Natural killer cell (primary cell): ENCODE measurements at regions of chr7 and their contacts with region 1.

Region 1: GRCh38 chr7:105149827-105150226 is 135.8 kb downstream of the KMT2E start:
- DNase-seq: no peak
- ATAC-seq: no peak
- H3K4me3 ChIP-seq: no peak overlapping the region
- H3K4me3 Mint-ChIP-seq: no peak overlapping the region
- H3K27ac ChIP-seq: no peak overlapping the region
- H3K27ac Mint-ChIP-seq: peak overlapping the region in 1 of 2 donors; percentile 36
- H3K4me1 ChIP-seq: peaks cover 4% of the 10 kb centered on the region
- H3K4me1 Mint-ChIP-seq: peaks cover 28 to 33% of the 10 kb centered on the region in 2 donors
- H3K27me3 ChIP-seq: no peaks in the 10 kb centered on the region
- H3K27me3 Mint-ChIP-seq: no peaks in the 10 kb centered on the region
- CTCF ChIP-seq: no peak

Region 2: DNA sequence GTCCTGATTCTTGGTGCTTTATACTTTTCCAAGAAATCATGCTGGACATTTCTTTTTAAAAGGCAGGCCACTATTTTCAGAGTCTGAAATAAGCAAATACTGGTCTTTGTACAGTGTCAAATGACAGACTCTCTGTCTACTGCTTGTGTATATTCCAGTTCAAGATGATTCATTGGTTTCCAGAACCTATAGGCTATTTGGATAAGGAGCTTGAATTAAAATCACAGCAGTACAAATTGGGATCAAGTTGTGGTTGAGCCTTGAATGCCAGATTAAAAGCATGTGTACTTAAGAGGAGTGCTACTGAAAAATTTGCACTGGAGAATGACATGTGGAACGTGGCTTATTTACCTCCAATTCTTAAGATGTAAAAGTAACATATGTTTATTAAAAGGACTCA is 125.1 kb before region 1 on chr7:
- intact Hi-C with region 1: no loop called
- DNase-seq: no peak
- ATAC-seq: no peak
- H3K4me3 ChIP-seq: no peak overlapping the region
- H3K4me3 Mint-ChIP-seq: peak overlapping the region; percentile 57
- H3K27ac ChIP-seq: no peak overlapping the region
- H3K27ac Mint-ChIP-seq: peak overlapping the region; percentile 65 to 84
- H3K4me1 ChIP-seq: peaks cover 36% of the 10 kb centered on the region
- H3K4me1 Mint-ChIP-seq: peaks cover 79 to 86% of the 10 kb centered on the region in 2 donors
- H3K27me3 ChIP-seq: no peaks in the 10 kb centered on the region
- H3K27me3 Mint-ChIP-seq: no peaks in the 10 kb centered on the region
- CTCF ChIP-seq: no peak

Region 3: GRCh38 chr7:105336009-105336408 is 186.2 kb after region 1 on chr7:
- intact Hi-C with region 1: loop called (anchors 5 kb)
- DNase-seq: peak in 1 of 2 donors; percentile 43
- ATAC-seq: no peak
- H3K4me3 ChIP-seq: no peak overlapping the region
- H3K4me3 Mint-ChIP-seq: no peak overlapping the region
- H3K27ac ChIP-seq: no peak overlapping the region
- H3K27ac Mint-ChIP-seq: no peak overlapping the region
- H3K4me1 ChIP-seq: peaks cover 15% of the 10 kb centered on the region
- H3K4me1 Mint-ChIP-seq: peaks cover 25 to 29% of the 10 kb centered on the region in 2 donors
- H3K27me3 ChIP-seq: no peaks in the 10 kb centered on the region
- H3K27me3 Mint-ChIP-seq: no peaks in the 10 kb centered on the region
- CTCF ChIP-seq: peak; percentile 64

Region 4: GRCh38 chr7:105429746-105430612 is 280.2 kb after region 1 on chr7:
- intact Hi-C with region 1: loop called (anchors 1 kb)
- DNase-seq: peak; percentile 19 to 79
- ATAC-seq: peak; percentile 44 to 75 (median 58)
- H3K4me3 ChIP-seq: no peak overlapping the region
- H3K4me3 Mint-ChIP-seq: no peak overlapping the region
- H3K27ac ChIP-seq: no peak overlapping the region
- H3K27ac Mint-ChIP-seq: no peak overlapping the region
- H3K4me1 ChIP-seq: no peaks in the 10 kb centered on the region
- H3K4me1 Mint-ChIP-seq: no peaks in the 10 kb centered on the region
- H3K27me3 ChIP-seq: no peaks in the 10 kb centered on the region
- H3K27me3 Mint-ChIP-seq: no peaks in the 10 kb centered on the region
- CTCF ChIP-seq: peak; percentile 57

Region 5: GRCh38 chr7:105635197-105635596 is 485.4 kb after region 1 on chr7:
- intact Hi-C with region 1: no loop called
- DNase-seq: no peak
- ATAC-seq: no peak
- H3K4me3 ChIP-seq: no peak overlapping the region
- H3K4me3 Mint-ChIP-seq: no peak overlapping the region
- H3K27ac ChIP-seq: no peak overlapping the region
- H3K27ac Mint-ChIP-seq: no peak overlapping the region
- H3K4me1 ChIP-seq: no peaks in the 10 kb centered on the region
- H3K4me1 Mint-ChIP-seq: no peaks in the 10 kb centered on the region
- H3K27me3 ChIP-seq: no peaks in the 10 kb centered on the region
- H3K27me3 Mint-ChIP-seq: no peaks in the 10 kb centered on the region
- CTCF ChIP-seq: no peak